ENCODE measurements at regions of chr3 and their contacts with region 1.

Region 1: GRCh38 chr3:51498876-51499738 is 708 bp downstream of the DCAF1 start:
- DNase-seq: peak; percentile 93
- H3K4me3 Mint-ChIP-seq: peak overlapping the region; percentile 82
- H3K27ac Mint-ChIP-seq: peak overlapping the region; percentile 94
- H3K4me1 Mint-ChIP-seq: peaks cover 11% of the 10 kb centered on the region
- H3K27me3 Mint-ChIP-seq: peaks cover 1% of the 10 kb centered on the region

Region 2: DNA sequence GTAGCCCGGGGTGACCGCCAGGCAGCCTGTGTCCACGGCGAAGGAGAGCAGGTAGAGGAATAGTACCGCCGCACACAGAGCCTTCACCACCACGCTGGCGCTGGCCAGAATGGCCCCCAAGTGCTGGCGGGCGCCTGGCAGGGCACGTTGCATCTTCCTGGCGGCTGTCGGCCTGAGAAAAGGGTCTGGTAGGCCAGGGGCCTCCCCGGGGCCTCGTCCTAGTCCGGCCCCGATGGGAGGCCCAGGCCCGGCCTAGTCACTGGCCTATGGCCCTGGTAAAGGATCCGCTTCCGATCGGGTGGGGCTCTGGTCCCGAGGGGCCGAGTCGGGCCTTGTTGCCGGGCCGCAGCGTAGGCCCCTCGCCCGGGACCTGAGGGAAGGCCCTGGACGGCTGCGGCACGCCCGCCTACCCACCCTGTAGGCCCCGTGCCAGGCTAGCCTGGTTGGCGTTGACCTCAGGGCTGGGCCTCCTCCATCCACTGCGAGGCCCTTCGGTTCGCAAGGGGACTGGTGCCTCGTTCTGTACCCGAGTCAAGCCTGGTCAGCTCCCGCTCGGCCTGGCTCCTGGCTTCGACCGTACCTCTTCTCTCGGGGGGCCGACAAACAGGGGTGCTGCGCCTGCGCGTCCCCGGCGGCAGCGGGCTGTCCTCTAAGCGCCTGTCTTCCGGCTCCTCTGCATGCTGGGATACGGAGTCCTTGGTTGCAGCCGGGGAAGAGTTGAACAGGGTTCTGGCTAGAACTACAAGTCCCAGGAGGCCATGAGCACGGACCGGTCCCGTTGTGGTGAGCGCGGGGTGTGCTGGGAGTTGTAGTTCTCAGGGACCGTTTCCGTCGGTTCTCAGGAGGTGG is 1140.0 kb before region 1 on chr3 and contains the start of gene TMEM115:
- CTCF ChIA-PET with region 1: no interaction called
- POLR2A ChIA-PET with region 1: no interaction called
- intact Hi-C with region 1: loop called (anchors 10 kb)
- DNase-seq: peak; percentile 97
- H3K4me3 Mint-ChIP-seq: peak within 1 kb of the TSS; percentile 95
- H3K27ac Mint-ChIP-seq: peak within 1 kb of the TSS; percentile 86
- H3K4me1 Mint-ChIP-seq: peaks cover 39% of the 10 kb centered on the region
- H3K27me3 Mint-ChIP-seq: no peaks in the 10 kb centered on the region
- total RNA-seq, gene TMEM115: 16.0 TPM

Region 3: GRCh38 chr3:51328206-51328605 is 170.9 kb before region 1 on chr3:
- CTCF ChIA-PET with region 1: no interaction called
- POLR2A ChIA-PET with region 1: no interaction called
- intact Hi-C with region 1: no loop called
- DNase-seq: no peak
- H3K4me3 Mint-ChIP-seq: no peak overlapping the region
- H3K27ac Mint-ChIP-seq: no peak overlapping the region
- H3K4me1 Mint-ChIP-seq: no peaks in the 10 kb centered on the region
- H3K27me3 Mint-ChIP-seq: peaks cover 4% of the 10 kb centered on the region

Region 4: DNA sequence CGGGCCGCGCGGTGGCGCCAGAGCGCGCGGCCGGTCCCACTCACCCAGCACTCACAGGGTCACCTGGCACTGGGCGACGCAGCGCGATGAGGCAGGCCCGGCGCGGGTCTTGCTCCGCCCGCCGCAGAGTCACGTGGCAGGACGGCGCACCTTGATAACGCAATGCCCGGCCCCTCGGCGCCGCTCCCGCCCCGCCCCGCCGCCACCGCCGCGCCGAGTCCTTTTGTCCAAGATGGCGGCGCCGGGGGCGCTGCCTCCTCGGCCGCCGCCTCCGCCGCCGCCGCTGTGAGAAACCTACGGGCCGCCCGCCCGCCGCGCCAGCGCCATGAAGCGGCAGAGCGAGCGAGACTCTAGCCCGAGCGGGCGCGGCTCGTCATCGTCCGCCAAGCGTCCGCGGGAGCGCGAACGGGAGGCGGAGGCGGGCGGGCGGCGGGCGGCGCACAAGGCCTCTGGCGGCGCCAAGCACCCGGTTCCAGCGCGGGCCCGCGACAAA is 108.0 kb before region 1 on chr3 and contains the start of gene RBM15B:
- CTCF ChIA-PET with region 1: interaction called, 12 read pairs
- POLR2A ChIA-PET with region 1: interaction called, 10 read pairs
- intact Hi-C with region 1: loop called (anchors 1 kb)
- DNase-seq: peak; percentile 98
- H3K4me3 Mint-ChIP-seq: peak within 1 kb of the TSS; percentile 86
- H3K27ac Mint-ChIP-seq: peak within 1 kb of the TSS; percentile 87
- H3K4me1 Mint-ChIP-seq: peaks cover 81% of the 10 kb centered on the region
- H3K27me3 Mint-ChIP-seq: no peaks in the 10 kb centered on the region
- total RNA-seq, gene RBM15B: 19.0 to 19.4 TPM

Region 5: GRCh38 chr3:51436998-51437639 is 62.0 kb before region 1 on chr3:
- CTCF ChIA-PET with region 1: no interaction called
- POLR2A ChIA-PET with region 1: no interaction called
- intact Hi-C with region 1: no loop called
- DNase-seq: no peak
- H3K4me3 Mint-ChIP-seq: no peak overlapping the region
- H3K27ac Mint-ChIP-seq: no peak overlapping the region
- H3K4me1 Mint-ChIP-seq: peaks cover 13% of the 10 kb centered on the region
- H3K27me3 Mint-ChIP-seq: no peaks in the 10 kb centered on the region

Region 6: GRCh38 chr3:51538459-51539290 is 39.6 kb after region 1 on chr3 and contains the start of gene RAD54L2:
- CTCF ChIA-PET with region 1: interaction called, 54 read pairs
- POLR2A ChIA-PET with region 1: interaction called, 9 read pairs
- intact Hi-C with region 1: loop called (anchors 1 kb)
- DNase-seq: peak; percentile 83
- H3K4me3 Mint-ChIP-seq: peak within 1 kb of the TSS; percentile 88
- H3K27ac Mint-ChIP-seq: peak within 1 kb of the TSS; percentile 87
- H3K4me1 Mint-ChIP-seq: peaks cover 28% of the 10 kb centered on the region
- H3K27me3 Mint-ChIP-seq: no peaks in the 10 kb centered on the region
- total RNA-seq, gene RAD54L2: 27.6 to 30.0 TPM

Region 7: DNA sequence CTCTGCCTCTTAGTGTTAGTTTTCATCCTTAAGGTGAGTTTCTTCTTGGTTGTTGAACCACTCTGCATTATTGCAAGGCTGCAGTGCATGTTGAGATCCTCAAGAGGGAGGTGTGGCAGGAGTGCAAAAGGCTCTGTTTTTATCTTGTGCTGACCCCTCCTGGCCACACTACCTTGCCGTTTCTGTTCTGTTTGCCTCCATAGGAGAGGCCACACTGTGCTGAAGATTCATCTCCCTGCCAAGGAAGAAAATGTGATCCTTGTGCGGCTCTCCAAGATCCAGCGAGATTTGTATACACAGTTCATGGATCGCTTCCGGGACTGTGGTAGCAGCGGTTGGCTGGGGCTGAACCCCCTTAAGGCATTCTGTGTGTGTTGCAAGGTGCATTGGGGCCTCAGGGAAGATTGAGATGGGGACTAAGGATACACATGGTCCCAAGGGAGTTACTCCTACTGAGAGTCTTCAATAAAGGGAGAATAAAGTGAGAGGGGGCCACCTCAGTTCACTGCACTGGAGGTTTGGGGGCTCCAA is 138.9 kb after region 1 on chr3:
- CTCF ChIA-PET with region 1: interaction called, 7 read pairs
- POLR2A ChIA-PET with region 1: no interaction called
- intact Hi-C with region 1: loop called (anchors 1 kb)
- DNase-seq: peak; percentile 45
- H3K4me3 Mint-ChIP-seq: no peak overlapping the region
- H3K27ac Mint-ChIP-seq: no peak overlapping the region
- H3K4me1 Mint-ChIP-seq: no peaks in the 10 kb centered on the region
- H3K27me3 Mint-ChIP-seq: no peaks in the 10 kb centered on the region

Region 8: GRCh38 chr3:51682079-51682478 is 183.0 kb after region 1 on chr3:
- CTCF ChIA-PET with region 1: interaction called, 261 read pairs
- POLR2A ChIA-PET with region 1: interaction called, 21 read pairs
- intact Hi-C with region 1: loop called (anchors 1 kb)
- DNase-seq: peak; percentile 86
- H3K4me3 Mint-ChIP-seq: no peak overlapping the region
- H3K27ac Mint-ChIP-seq: peak overlapping the region; percentile 79
- H3K4me1 Mint-ChIP-seq: peaks cover 83% of the 10 kb centered on the region
- H3K27me3 Mint-ChIP-seq: no peaks in the 10 kb centered on the region

Region 9: DNA sequence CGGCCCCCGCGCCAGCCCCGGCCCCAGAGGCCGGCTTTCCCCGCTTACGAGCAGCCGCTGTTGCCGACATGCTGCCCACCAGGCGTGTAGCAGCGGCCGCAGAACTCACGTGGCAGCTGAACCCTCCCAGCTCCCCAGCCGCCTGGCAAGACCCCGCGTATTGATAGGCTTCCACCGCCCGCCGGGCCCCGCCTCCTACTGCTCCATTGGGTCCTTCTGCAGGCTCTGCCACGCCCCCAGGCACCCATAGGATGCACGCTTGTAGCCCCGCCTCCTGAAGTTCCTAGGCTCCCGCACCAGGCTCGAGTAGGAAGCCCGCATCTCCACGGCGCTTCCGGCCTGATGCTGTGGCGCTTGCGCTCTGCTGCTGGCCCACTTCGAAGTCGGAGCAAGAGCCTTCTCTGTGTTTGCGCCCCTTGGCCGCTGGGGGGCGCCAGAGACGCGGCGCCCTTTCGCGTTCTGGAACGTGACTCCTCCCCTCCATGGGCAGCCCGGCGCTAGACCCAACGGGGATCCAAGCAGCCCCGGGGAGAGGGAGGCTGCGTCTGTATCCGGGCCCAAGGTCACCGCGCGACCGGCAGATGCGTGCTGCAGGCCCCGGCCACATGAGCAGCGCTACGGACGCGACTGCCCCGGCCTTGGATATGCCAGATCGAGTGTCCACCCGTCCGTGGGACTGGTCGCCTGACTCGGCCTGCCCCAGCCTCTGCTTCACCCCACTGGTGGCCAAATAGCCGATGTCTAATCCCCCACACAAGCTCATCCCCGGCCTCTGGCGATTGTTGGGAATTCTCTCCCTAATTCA is 442.9 kb after region 1 on chr3 and contains the starts of genes PARP3 and RRP9:
- CTCF ChIA-PET with region 1: interaction called, 6 read pairs
- POLR2A ChIA-PET with region 1: interaction called, 4 read pairs
- intact Hi-C with region 1: loop called (anchors 2 kb)
- DNase-seq: peak; percentile 100
- H3K4me3 Mint-ChIP-seq: peak within 1 kb of the TSS; percentile 87
- H3K27ac Mint-ChIP-seq: peak within 1 kb of the TSS; percentile 83
- H3K4me1 Mint-ChIP-seq: peaks cover 29% of the 10 kb centered on the region
- H3K27me3 Mint-ChIP-seq: no peaks in the 10 kb centered on the region
- total RNA-seq, gene PARP3: 12.1 to 13.4 TPM
- total RNA-seq, gene RRP9: 32.3 to 35.4 TPM

Measured in activated CD4-positive, alpha-beta memory T cell treated with anti-CD3 and anti-CD28 coated beads for 36 hours (primary cell).